ENCODE measurements at regions of chr10 and their contacts with region 1.

Region 1: GRCh38 chr10:60358282-60358681 is 31.4 kb downstream of the ANK3 start:
- DNase-seq: peak; percentile 25
- H3K4me3 Mint-ChIP-seq: no peak overlapping the region
- H3K27ac Mint-ChIP-seq: no peak overlapping the region
- H3K4me1 Mint-ChIP-seq: no peaks in the 10 kb centered on the region
- H3K27me3 Mint-ChIP-seq: no peaks in the 10 kb centered on the region

Region 2: GRCh38 chr10:60377955-60378354 is 19.7 kb after region 1 on chr10:
- CTCF ChIA-PET with region 1: no interaction called
- intact Hi-C with region 1: loop called (anchors 1 kb)
- DNase-seq: no peak
- H3K4me3 Mint-ChIP-seq: no peak overlapping the region
- H3K27ac Mint-ChIP-seq: no peak overlapping the region
- H3K4me1 Mint-ChIP-seq: peaks cover 6% of the 10 kb centered on the region
- H3K27me3 Mint-ChIP-seq: no peaks in the 10 kb centered on the region

Region 3: GRCh38 chr10:60901561-60902235 is 543.4 kb after region 1 on chr10:
- CTCF ChIA-PET with region 1: no interaction called
- intact Hi-C with region 1: no loop called
- DNase-seq: no peak
- H3K4me3 Mint-ChIP-seq: no peak overlapping the region
- H3K27ac Mint-ChIP-seq: no peak overlapping the region
- H3K4me1 Mint-ChIP-seq: no peaks in the 10 kb centered on the region
- H3K27me3 Mint-ChIP-seq: no peaks in the 10 kb centered on the region

Region 4: GRCh38 chr10:61952028-61952674 is 1593.9 kb after region 1 on chr10:
- CTCF ChIA-PET with region 1: no interaction called
- intact Hi-C with region 1: no loop called
- DNase-seq: no peak
- H3K4me3 Mint-ChIP-seq: no peak overlapping the region
- H3K27ac Mint-ChIP-seq: peak overlapping the region; percentile 11
- H3K4me1 Mint-ChIP-seq: peaks cover 65% of the 10 kb centered on the region
- H3K27me3 Mint-ChIP-seq: no peaks in the 10 kb centered on the region